ENCODE measurements at regions of chr3 and their contacts with region 1.

Region 1: DNA sequence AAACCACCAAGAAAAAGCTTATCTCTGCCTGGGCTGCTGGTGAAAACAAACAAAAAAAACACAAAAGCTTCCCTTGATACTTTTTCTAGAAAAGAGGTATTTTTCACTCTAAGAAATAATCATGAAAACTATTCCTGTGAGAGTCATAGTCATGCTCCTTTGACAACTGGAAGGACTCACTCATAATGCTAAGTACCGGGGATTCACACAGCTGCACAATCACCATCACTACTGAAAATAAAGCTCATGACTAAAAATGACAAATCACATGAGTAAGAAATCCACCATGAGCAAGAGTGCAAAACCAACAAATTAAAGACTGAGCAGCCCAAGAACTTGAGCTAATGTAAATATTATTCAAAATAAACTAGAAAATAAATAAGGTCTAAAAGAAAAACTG is 10.6 kb upstream of the POU1F1 start:
- DNase-seq: no peak
- H3K4me3 Mint-ChIP-seq: no peak overlapping the region
- H3K27ac Mint-ChIP-seq: no peak overlapping the region
- H3K4me1 Mint-ChIP-seq: peaks cover 3% of the 10 kb centered on the region
- H3K27me3 Mint-ChIP-seq: peaks cover 5% of the 10 kb centered on the region

Region 2: GRCh38 chr3:87033205-87033604 is 253.8 kb before region 1 on chr3:
- CTCF ChIA-PET with region 1: no interaction called
- POLR2A ChIA-PET with region 1: no interaction called
- intact Hi-C with region 1: no loop called
- DNase-seq: no peak
- H3K4me3 Mint-ChIP-seq: no peak overlapping the region
- H3K27ac Mint-ChIP-seq: no peak overlapping the region
- H3K4me1 Mint-ChIP-seq: no peaks in the 10 kb centered on the region
- H3K27me3 Mint-ChIP-seq: no peaks in the 10 kb centered on the region

Region 3: GRCh38 chr3:87272718-87273341 is 14.2 kb before region 1 on chr3:
- CTCF ChIA-PET with region 1: interaction called, 3 read pairs
- POLR2A ChIA-PET with region 1: no interaction called
- intact Hi-C with region 1: loop called (anchors 1 kb)
- DNase-seq: no peak
- H3K4me3 Mint-ChIP-seq: no peak overlapping the region
- H3K27ac Mint-ChIP-seq: no peak overlapping the region
- H3K4me1 Mint-ChIP-seq: peaks cover 26% of the 10 kb centered on the region
- H3K27me3 Mint-ChIP-seq: peaks cover 7% of the 10 kb centered on the region

Region 4: DNA sequence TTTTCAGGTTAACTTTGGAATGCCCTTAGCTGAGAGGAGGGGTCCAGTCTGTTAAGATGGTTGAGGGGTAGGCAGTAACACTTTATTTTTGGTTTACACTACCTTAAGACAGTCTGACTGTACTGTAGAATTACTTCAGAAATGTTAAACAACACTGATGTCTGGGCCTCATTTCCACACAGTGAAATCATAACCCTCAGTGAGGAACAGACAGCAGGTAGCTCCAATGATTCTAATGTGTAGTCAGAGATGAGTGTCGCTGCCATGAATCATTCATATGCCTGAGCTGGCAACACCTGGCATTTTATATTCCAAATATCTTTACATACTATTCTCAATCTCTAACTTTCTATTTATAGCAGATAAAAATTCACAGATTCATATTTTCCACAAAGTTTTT is 26.6 kb after region 1 on chr3:
- CTCF ChIA-PET with region 1: no interaction called
- POLR2A ChIA-PET with region 1: no interaction called
- intact Hi-C with region 1: loop called (anchors 1 kb)
- DNase-seq: peak; percentile 22
- H3K4me3 Mint-ChIP-seq: no peak overlapping the region
- H3K27ac Mint-ChIP-seq: no peak overlapping the region
- H3K4me1 Mint-ChIP-seq: peaks cover 13% of the 10 kb centered on the region
- H3K27me3 Mint-ChIP-seq: peaks cover 8% of the 10 kb centered on the region

Region 5: DNA sequence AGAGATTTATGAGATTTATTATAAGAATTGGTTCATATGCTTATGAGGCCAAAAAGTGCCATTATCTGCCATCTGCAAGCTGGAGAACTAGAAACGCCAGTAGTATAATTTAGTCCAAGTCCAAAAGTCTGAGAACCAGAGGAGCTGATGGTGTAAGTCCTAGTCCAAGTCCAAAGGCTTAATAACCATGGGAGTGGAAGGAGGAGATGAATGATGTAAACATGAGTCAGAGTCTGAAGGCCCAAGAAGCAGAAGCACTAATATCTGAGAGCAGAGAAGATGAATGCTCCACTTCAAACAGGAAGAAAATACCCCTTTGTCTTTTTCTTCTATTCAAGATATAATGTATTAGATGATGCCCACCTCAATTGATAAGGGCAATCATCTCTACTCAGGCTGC is 586.1 kb after region 1 on chr3:
- CTCF ChIA-PET with region 1: no interaction called
- POLR2A ChIA-PET with region 1: no interaction called
- intact Hi-C with region 1: no loop called
- DNase-seq: no peak
- H3K4me3 Mint-ChIP-seq: no peak overlapping the region
- H3K27ac Mint-ChIP-seq: no peak overlapping the region
- H3K4me1 Mint-ChIP-seq: no peaks in the 10 kb centered on the region
- H3K27me3 Mint-ChIP-seq: peaks cover 2% of the 10 kb centered on the region

Measured in activated CD4-positive, alpha-beta memory T cell treated with anti-CD3 and anti-CD28 coated beads for 36 hours (primary cell).